ENCODE measurements at regions of chr12 and their contacts with region 1.

Region 1: GRCh38 chr12:108414021-108414420 is 74.9 kb upstream of the CMKLR1 start:
- DNase-seq: no peak
- ATAC-seq: no peak
- H3K4me3 ChIP-seq: no peak overlapping the region
- H3K27ac ChIP-seq: no peak overlapping the region
- H3K4me1 ChIP-seq: no peaks in the 10 kb centered on the region
- H3K27me3 ChIP-seq: peaks cover 2% of the 10 kb centered on the region; the same call in 1 of the 2 replicates
- CTCF ChIP-seq: no peak

Region 2: DNA sequence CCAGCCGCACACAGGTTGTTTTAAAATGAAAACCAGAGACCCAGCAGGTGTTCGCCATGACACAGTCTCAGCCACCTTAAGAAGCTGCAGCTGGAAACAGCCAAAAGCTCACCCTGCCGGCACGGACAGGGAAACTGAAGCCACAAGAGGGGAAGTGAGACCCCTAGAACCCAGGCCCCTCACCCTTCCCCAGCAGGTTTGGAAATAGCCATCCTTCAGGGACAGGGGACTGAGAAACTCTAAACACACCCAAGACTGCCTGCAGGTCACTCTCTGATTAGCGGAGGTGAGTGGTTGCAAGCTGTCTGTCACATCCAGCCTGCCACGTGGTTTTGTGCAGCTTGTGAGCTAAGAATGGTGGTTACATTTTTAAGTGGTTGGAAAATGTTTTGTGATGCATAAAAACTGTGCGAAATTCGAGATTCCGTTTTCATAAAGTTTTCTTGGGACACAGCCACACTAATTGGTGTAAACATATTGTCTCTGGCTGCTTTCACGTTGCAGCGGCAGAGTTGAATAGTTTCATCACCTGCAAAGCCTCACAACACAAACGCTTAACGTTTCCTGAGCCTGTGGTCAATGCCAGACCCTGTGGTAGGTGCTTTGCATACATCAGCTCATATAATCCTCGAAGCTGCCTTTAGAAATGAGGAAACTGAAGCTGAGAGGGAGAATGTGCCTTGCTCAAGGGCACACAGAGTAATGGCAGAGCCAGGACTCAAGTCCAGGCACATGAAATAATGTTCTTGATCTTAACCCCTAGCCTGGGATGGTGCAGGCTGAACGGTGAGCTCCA is 221.4 kb after region 1 on chr12:
- CTCF ChIA-PET with region 1: no interaction called
- POLR2A ChIA-PET with region 1: no interaction called
- in situ Hi-C with region 1: no loop called
- intact Hi-C with region 1: no loop called
- DNase-seq: no peak
- ATAC-seq: no peak
- H3K4me3 ChIP-seq: no peak overlapping the region
- H3K27ac ChIP-seq: no peak overlapping the region
- H3K4me1 ChIP-seq: peaks cover 15% of the 10 kb centered on the region
- H3K27me3 ChIP-seq: no peaks in the 10 kb centered on the region
- CTCF ChIP-seq: no peak

Region 3: GRCh38 chr12:109154451-109155438 is 740.7 kb after region 1 on chr12:
- CTCF ChIA-PET with region 1: no interaction called
- POLR2A ChIA-PET with region 1: no interaction called
- in situ Hi-C with region 1: no loop called
- intact Hi-C with region 1: no loop called
- DNase-seq: peak; percentile 22
- ATAC-seq: peak; percentile 98
- H3K4me3 ChIP-seq: peak overlapping the region; percentile 71 to 88
- H3K27ac ChIP-seq: peak overlapping the region; percentile 61
- H3K4me1 ChIP-seq: no peaks in the 10 kb centered on the region
- H3K27me3 ChIP-seq: no peaks in the 10 kb centered on the region
- CTCF ChIP-seq: no peak

Region 4: GRCh38 chr12:109642506-109643132 is 1228.6 kb after region 1 on chr12:
- CTCF ChIA-PET with region 1: no interaction called
- POLR2A ChIA-PET with region 1: interaction called, 17 read pairs
- in situ Hi-C with region 1: no loop called
- intact Hi-C with region 1: no loop called
- DNase-seq: no peak
- ATAC-seq: no peak
- H3K4me3 ChIP-seq: no peak overlapping the region
- H3K27ac ChIP-seq: no peak overlapping the region
- H3K4me1 ChIP-seq: no peaks in the 10 kb centered on the region
- H3K27me3 ChIP-seq: no peaks in the 10 kb centered on the region
- CTCF ChIP-seq: no peak

Measured in Panc1 (cell line).